HCT116 (cell line): ENCODE measurements at regions of chr4 and their contacts with region 1.

Region 1: GRCh38 chr4:154982187-154983047 is 201.3 kb downstream of the RBM46 start:
- DNase-seq: peak; percentile 58
- ATAC-seq: peak; percentile 98
- H3K4me3 ChIP-seq: no peak overlapping the region
- H3K27ac ChIP-seq: no peak overlapping the region
- H3K4me1 ChIP-seq: no peaks in the 10 kb centered on the region
- H3K27me3 ChIP-seq: no peaks in the 10 kb centered on the region
- CTCF ChIP-seq: peak; percentile 75 to 83 (median 75)
- POLR2A ChIP-seq: no peak
- RAD21 ChIP-seq: peak; percentile 77

Region 2: DNA sequence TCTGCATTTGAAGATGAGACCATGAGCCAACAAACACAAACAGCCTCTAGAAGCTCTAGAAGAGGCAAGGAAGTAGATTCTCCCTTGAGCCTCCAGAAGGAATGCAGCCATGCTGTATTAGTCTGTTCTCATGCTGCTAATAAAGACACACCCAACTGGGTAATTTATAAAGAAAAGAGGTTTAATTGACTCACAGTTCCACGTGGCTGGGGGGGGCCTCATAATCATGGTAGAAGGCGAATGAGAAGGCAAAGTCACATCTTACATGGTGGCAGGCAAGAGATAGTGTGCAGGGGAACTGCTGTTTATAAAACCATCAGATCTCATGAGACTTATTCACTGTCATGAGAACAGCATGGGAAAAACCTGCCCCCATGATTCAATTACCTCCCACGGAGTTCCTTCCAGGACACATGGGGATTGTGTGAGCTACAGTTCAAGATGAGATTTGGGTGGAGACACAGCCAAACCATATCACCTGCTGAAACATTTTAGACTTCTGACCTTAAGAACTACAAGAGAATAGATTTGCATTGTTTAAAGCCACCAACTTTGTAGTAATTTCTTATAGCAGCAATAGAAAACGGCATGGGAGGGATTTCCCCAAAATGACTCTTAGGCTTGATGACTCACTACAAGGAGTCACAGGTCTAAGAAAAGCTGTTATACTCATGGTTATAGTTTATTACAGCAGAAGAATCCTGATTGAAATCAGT is 909.2 kb before region 1 on chr4:
- CTCF ChIA-PET with region 1: no interaction called
- POLR2A ChIA-PET with region 1: no interaction called
- RAD21 ChIA-PET with region 1: no interaction called
- intact Hi-C with region 1: no loop called
- DNase-seq: no peak
- ATAC-seq: no peak
- H3K4me3 ChIP-seq: no peak overlapping the region
- H3K27ac ChIP-seq: no peak overlapping the region
- H3K4me1 ChIP-seq: peaks cover 0 to 6% of the 10 kb centered on the region in 2 experiments; a peak in 1 of 4 replicates
- H3K27me3 ChIP-seq: no peaks in the 10 kb centered on the region
- CTCF ChIP-seq: no peak
- POLR2A ChIP-seq: no peak
- RAD21 ChIP-seq: no peak

Region 3: GRCh38 chr4:154551872-154552686 is 430.3 kb before region 1 on chr4:
- CTCF ChIA-PET with region 1: no interaction called
- POLR2A ChIA-PET with region 1: no interaction called
- RAD21 ChIA-PET with region 1: no interaction called
- intact Hi-C with region 1: loop called (anchors 10 kb)
- DNase-seq: peak; percentile 79
- ATAC-seq: peak; percentile 66
- H3K4me3 ChIP-seq: no peak overlapping the region
- H3K27ac ChIP-seq: no peak overlapping the region
- H3K4me1 ChIP-seq: peaks cover 2 to 12% of the 10 kb centered on the region in 2 experiments; a peak in 3 of 4 replicates
- H3K27me3 ChIP-seq: no peaks in the 10 kb centered on the region
- CTCF ChIP-seq: peak; percentile 68 to 83 (median 83)
- POLR2A ChIP-seq: no peak
- RAD21 ChIP-seq: peak; percentile 86

Region 4: GRCh38 chr4:155353923-155354540 is 371.6 kb after region 1 on chr4:
- CTCF ChIA-PET with region 1: interaction called, 12 read pairs
- POLR2A ChIA-PET with region 1: no interaction called
- RAD21 ChIA-PET with region 1: interaction called in 1 of 2 experiments, 3 read pairs
- intact Hi-C with region 1: loop called (anchors 1 kb)
- DNase-seq: peak; percentile 51
- ATAC-seq: peak; percentile 100
- H3K4me3 ChIP-seq: no peak overlapping the region
- H3K27ac ChIP-seq: no peak overlapping the region
- H3K4me1 ChIP-seq: no peaks in the 10 kb centered on the region
- H3K27me3 ChIP-seq: no peaks in the 10 kb centered on the region
- CTCF ChIP-seq: peak; percentile 77 to 85 (median 81)
- POLR2A ChIP-seq: no peak
- RAD21 ChIP-seq: peak; percentile 81

Region 5: GRCh38 chr4:155371432-155372043 is 389.1 kb after region 1 on chr4:
- CTCF ChIA-PET with region 1: interaction called, 3 read pairs
- POLR2A ChIA-PET with region 1: no interaction called
- RAD21 ChIA-PET with region 1: no interaction called
- intact Hi-C with region 1: loop called (anchors 1 kb)
- DNase-seq: peak; percentile 16
- ATAC-seq: peak; percentile 70; the same call in 1 of the 2 replicates
- H3K4me3 ChIP-seq: no peak overlapping the region
- H3K27ac ChIP-seq: no peak overlapping the region
- H3K4me1 ChIP-seq: no peaks in the 10 kb centered on the region
- H3K27me3 ChIP-seq: no peaks in the 10 kb centered on the region
- CTCF ChIP-seq: peak; percentile 17 to 58 (median 57); a peak in 3 of 6 replicates
- POLR2A ChIP-seq: no peak
- RAD21 ChIP-seq: peak; percentile 54

Region 6: GRCh38 chr4:155787113-155787710 is 804.8 kb after region 1 on chr4:
- CTCF ChIA-PET with region 1: no interaction called
- POLR2A ChIA-PET with region 1: no interaction called
- RAD21 ChIA-PET with region 1: no interaction called
- intact Hi-C with region 1: loop called (anchors 2 kb)
- DNase-seq: peak; percentile 44
- ATAC-seq: peak; percentile 98
- H3K4me3 ChIP-seq: no peak overlapping the region
- H3K27ac ChIP-seq: no peak overlapping the region
- H3K4me1 ChIP-seq: no peaks in the 10 kb centered on the region
- H3K27me3 ChIP-seq: no peaks in the 10 kb centered on the region
- CTCF ChIP-seq: peak; percentile 72 to 81 (median 74)
- POLR2A ChIP-seq: no peak
- RAD21 ChIP-seq: peak; percentile 86